ENCODE measurements at regions of chr12 and their contacts with region 1.

Region 1: DNA sequence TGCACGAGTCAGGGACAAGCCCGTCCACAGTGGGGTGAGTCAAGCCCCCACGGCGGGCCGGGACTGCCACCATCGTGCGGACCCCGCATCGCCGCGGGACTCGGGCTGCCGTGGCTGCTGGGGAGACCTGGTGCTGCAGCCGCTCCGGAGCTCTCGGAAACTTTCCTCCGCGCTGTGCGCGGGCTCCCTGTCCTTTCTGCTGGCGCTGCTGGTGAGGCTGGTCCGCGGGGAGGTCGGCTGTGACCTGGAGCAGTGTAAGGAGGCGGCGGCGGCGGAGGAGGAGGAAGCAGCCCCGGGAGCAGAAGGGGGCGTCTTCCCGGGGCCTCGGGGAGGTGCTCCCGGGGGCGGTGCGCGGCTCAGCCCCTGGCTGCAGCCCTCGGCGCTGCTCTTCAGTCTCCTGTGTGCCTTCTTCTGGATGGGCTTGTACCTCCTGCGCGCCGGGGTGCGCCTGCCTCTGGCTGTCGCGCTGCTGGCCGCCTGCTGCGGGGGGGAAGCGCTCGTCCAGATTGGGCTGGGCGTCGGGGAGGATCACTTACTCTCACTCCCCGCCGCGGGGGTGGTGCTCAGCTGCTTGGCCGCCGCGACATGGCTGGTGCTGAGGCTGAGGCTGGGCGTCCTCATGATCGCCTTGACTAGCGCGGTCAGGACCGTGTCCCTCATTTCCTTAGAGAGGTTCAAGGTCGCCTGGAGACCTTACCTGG is 1.1 kb downstream of the PDE3A start:
- H3K4me3 Mint-ChIP-seq: peak overlapping the region; percentile 88
- H3K27ac Mint-ChIP-seq: no peak overlapping the region
- H3K4me1 Mint-ChIP-seq: peaks cover 27% of the 10 kb centered on the region
- H3K27me3 Mint-ChIP-seq: peaks cover 67% of the 10 kb centered on the region

Region 2: GRCh38 chr12:19608039-19608438 is 761.4 kb before region 1 on chr12:
- intact Hi-C with region 1: no loop called
- H3K4me3 Mint-ChIP-seq: no peak overlapping the region
- H3K27ac Mint-ChIP-seq: no peak overlapping the region
- H3K4me1 Mint-ChIP-seq: no peaks in the 10 kb centered on the region
- H3K27me3 Mint-ChIP-seq: no peaks in the 10 kb centered on the region

Region 3: DNA sequence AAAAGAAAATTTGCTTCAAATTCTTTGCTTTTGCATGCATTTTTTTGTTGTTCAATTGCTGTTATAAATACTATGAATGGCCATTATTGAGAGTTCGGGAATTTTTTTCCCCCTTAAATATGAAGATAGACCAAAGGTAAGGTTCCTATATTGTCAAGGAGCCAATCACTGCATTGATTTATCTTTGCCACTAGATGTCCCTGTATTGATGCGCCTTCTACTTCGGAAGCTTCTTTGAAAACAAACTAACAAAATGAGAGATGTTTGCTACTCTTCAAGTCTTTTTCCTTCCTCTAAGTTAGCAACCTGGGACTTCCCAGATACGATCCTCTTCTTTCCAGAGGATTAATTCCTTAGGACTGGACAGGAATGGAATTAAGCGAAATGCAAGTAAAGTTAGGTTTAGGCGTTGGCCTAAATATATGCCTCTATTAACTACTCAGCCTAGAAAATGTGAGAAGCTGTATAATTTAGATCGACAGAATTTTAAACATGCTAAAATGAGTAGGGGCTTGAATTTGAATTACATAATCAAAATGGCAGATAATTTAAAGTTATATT is 612.1 kb before region 1 on chr12:
- intact Hi-C with region 1: loop called (anchors 10 kb)
- H3K4me3 Mint-ChIP-seq: no peak overlapping the region
- H3K27ac Mint-ChIP-seq: no peak overlapping the region
- H3K4me1 Mint-ChIP-seq: peaks cover 19% of the 10 kb centered on the region
- H3K27me3 Mint-ChIP-seq: no peaks in the 10 kb centered on the region

Region 4: DNA sequence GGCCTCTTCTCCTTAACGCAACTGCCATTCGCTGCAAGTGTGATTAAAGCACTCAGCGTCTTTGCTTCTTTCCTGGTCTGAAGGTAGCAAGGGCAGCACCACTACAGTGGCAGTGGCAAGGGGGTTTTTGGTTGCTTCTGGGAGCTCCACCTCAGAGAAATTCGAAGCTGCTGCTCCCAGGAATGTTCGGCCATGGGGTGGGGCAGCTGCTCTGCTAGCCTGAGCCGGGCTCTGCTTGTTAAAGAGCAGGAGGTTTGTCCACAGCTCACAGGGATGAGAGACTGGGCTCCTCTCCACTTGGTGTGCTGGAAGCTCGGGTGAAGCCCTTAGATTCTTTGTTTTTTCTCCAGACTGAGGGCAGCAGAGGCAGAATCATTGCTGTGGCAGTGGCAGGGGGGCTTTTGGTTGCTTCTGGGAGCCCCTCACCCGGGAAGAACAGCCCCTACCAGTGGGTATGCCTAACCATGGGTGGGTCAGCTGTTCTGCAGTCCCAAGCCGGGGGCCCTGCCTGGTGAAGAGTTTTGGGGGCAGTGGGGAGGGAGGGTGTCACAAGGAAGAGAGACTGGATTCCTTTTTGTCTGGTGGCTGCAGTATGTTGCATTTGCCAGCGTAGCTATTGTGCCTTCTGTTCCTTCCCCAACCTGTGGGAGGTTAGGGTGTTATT is 589.9 kb before region 1 on chr12:
- intact Hi-C with region 1: no loop called
- H3K4me3 Mint-ChIP-seq: no peak overlapping the region
- H3K27ac Mint-ChIP-seq: no peak overlapping the region
- H3K4me1 Mint-ChIP-seq: peaks cover 13% of the 10 kb centered on the region
- H3K27me3 Mint-ChIP-seq: no peaks in the 10 kb centered on the region

Region 5: DNA sequence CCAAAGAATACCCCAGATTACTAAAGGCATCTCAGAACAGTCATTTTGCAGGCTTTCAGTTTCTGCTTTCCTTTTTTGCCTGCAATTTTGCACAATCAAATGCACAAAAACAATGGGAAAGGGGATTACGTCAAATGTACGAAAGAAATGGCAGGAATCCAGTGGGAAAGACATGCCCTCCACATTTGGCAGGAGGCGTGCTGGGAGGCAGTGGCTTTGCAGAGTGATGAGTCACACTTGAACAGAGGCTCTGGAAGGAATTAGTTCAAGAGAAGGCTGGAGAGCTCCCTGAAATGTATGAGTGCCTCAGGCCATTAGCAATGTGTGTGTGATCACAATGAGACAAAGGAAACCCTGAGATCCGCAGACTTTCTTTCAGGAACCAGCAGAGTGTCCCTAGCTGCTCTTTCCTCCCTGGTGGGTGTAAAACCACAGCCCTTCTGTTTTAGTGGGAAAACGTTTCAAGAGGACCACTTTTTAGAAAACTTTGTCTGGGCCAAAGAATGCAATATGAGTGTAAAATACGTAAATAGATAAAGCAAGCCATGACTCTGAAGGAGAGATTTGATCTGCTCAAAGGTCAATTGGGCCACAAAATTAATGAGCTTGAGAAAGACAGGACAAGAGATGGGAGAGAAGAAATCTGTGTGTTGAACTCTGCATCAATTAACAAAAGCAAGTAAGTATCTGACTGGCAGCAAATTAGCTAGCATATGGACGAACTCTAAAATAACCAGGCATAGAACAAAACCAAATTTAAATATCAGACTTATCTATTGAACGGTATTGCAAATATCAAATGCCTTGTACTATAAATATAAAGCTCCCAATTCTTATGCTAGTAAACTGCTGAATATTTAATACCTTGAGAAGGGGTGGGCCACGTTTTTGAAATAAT is 156.5 kb before region 1 on chr12:
- intact Hi-C with region 1: loop called (anchors 5 kb)
- H3K4me3 Mint-ChIP-seq: no peak overlapping the region
- H3K27ac Mint-ChIP-seq: peak overlapping the region; percentile 39
- H3K4me1 Mint-ChIP-seq: peaks cover 39% of the 10 kb centered on the region
- H3K27me3 Mint-ChIP-seq: no peaks in the 10 kb centered on the region

Region 6: DNA sequence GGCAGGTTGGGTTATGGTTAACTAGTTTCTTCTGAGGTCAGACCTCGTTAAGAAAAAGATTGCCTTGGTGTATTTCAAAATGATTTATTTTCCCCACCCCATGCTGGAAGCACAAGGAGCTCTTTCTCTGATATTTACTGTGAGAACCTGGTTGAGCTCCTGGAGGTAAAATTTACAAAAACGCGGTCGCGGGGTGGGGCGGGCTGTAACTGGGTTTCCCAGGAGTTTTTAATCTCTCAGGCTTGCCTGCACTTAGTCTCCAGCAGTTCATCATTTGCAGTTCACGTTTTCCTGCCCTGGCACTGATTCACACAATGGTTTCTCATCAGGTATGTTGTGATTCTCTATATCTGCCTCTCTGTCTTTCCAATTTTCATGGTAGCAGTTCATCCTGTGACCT is 69.0 kb before region 1 on chr12:
- intact Hi-C with region 1: no loop called
- H3K4me3 Mint-ChIP-seq: no peak overlapping the region
- H3K27ac Mint-ChIP-seq: no peak overlapping the region
- H3K4me1 Mint-ChIP-seq: no peaks in the 10 kb centered on the region
- H3K27me3 Mint-ChIP-seq: no peaks in the 10 kb centered on the region